Vagina (tissue), 2 donors: ENCODE measurements at regions of chr6 and their contacts with region 1.

Region 1: GRCh38 chr6:150395398-150396009 is 26.7 kb downstream of the IYD start:
- DNase-seq: no peak
- H3K4me3 ChIP-seq: no peak overlapping the region
- H3K27ac ChIP-seq: no peak overlapping the region
- H3K4me1 ChIP-seq: no peaks in the 10 kb centered on the region
- H3K27me3 ChIP-seq: no peaks in the 10 kb centered on the region
- CTCF ChIP-seq: peak; percentile 41 to 51 (median 49)
- POLR2A ChIP-seq: no peak

Region 2: DNA sequence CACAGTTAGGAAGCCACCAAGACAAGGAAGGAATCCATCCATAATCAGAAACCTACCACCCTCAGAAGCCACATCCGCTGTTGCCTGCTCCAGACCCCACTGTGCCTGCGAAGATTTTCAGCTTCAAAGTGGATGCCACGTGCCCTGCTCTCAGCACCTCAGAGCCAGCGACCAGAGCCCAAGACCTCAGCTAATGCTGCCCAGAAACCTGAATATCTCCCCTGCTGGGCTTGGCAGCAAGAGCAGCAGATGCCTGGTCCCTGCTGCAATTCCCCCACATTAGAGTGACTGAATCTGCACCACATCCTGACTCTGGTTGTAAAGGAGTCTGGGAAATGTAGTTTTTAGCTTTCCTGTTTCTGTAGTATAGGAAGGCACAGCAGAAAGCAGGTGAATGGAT is 315.9 kb before region 1 on chr6:
- intact Hi-C with region 1: loop called (anchors 10 kb)
- DNase-seq: no peak
- H3K4me3 ChIP-seq: no peak overlapping the region
- H3K27ac ChIP-seq: no peak overlapping the region
- H3K4me1 ChIP-seq: no peaks in the 10 kb centered on the region
- H3K27me3 ChIP-seq: no peaks in the 10 kb centered on the region
- CTCF ChIP-seq: no peak
- POLR2A ChIP-seq: no peak